ENCODE measurements at regions of chr12 and their contacts with region 1.

Region 1: GRCh38 chr12:50661300-50662115 is 102.4 kb upstream of the ATF1 start:
- DNase-seq: no peak
- H3K4me3 ChIP-seq: no peak overlapping the region
- H3K27ac ChIP-seq: no peak overlapping the region
- H3K4me1 ChIP-seq: no peaks in the 10 kb centered on the region
- H3K27me3 ChIP-seq: no peaks in the 10 kb centered on the region
- CTCF ChIP-seq: no peak
- POLR2A ChIP-seq: no peak

Region 2: GRCh38 chr12:50650285-50650684 is 11.2 kb before region 1 on chr12:
- intact Hi-C with region 1: loop called (anchors 1 kb)
- DNase-seq: no peak
- H3K4me3 ChIP-seq: no peak overlapping the region
- H3K27ac ChIP-seq: no peak overlapping the region
- H3K4me1 ChIP-seq: no peaks in the 10 kb centered on the region
- H3K27me3 ChIP-seq: no peaks in the 10 kb centered on the region
- CTCF ChIP-seq: no peak
- POLR2A ChIP-seq: no peak

Region 3: DNA sequence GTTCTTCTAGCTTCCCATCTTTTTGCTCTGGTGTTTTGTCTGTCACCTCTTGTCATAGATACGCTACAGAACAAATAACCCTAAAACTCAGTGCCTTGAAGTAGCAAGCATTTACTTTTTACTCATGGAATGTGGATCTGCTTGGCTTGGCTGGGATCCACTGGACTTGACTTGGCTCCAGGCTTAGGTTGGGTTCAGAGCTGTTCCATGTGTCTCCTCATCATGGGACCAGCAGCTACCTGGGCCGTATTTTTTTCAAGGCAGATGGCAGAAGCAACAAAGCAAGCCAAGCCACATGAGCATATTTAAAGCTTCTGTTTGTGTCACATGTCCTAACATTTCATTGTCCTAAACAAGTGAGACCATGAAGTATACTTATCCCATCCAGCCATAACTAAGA is 53.7 kb after region 1 on chr12:
- intact Hi-C with region 1: no loop called
- DNase-seq: peak in 1 of 2 donors; percentile 33
- H3K4me3 ChIP-seq: no peak overlapping the region
- H3K27ac ChIP-seq: peak overlapping the region; percentile 9 to 57
- H3K4me1 ChIP-seq: peaks cover 0 to 8% of the 10 kb centered on the region in 2 donors
- H3K27me3 ChIP-seq: no peaks in the 10 kb centered on the region
- CTCF ChIP-seq: no peak
- POLR2A ChIP-seq: no peak

Region 4: DNA sequence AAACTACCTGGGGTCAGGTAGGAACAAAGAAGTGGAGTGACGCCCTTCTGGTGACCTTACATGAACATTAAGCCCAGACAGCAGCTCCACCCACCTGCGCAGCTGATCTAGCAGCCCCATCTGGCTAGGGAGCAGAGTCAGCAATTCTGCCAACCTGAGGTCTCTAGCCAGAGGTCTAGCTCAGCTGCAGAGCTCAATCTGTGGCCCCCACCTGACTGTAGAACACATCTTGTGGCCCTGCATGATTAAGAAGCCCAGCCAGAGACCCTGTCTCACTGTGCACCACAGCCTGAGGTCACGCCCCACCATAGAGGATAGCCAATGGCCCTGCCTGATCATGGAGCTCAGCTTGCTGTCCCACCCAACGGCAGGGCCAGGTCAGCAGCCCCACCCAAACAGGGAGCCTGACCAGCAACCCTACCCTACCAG is 240.2 kb after region 1 on chr12:
- intact Hi-C with region 1: no loop called
- DNase-seq: no peak
- H3K4me3 ChIP-seq: no peak overlapping the region
- H3K27ac ChIP-seq: no peak overlapping the region
- H3K4me1 ChIP-seq: no peaks in the 10 kb centered on the region
- H3K27me3 ChIP-seq: no peaks in the 10 kb centered on the region
- CTCF ChIP-seq: no peak
- POLR2A ChIP-seq: no peak

Measured in breast epithelium (tissue), 4 donors.